ENCODE measurements at regions of chr4 and their contacts with region 1.

Region 1: DNA sequence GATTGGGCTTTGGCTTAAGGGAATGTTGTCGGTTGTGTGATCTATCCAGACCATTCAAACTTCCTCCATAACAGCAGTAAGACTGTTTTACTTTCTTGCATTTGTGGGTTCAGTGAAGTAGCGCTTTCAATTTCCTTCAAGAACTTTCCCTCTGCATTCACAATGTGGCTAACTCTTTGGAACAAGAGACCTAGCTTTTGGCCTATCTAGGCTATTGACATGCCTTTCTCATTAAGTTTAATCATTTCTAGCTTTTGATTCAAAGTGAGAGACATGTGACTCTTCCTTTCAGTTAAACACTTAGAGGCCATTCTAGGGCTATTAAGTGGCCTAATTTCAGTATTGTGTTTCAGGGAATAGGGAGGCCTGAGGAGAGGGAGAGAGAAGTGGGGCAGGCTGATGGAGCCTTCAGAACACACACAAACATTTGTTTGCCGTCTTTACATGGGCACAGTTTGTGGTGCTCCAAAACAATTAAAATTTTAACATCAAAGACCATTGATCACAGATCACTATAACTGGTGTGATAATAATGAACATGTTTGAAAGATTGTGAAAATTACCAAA is 34.1 kb downstream of the ADH5 start:
- DNase-seq: no peak
- H3K4me3 ChIP-seq: no peak overlapping the region
- H3K27ac ChIP-seq: no peak overlapping the region
- H3K4me1 ChIP-seq: 0 out of 7 replicates have a peak, but pooled peaks cover 0 to 1% (median 0%) of the 10 kb centered on the region in 4 experiments
- H3K27me3 ChIP-seq: no peaks in the 10 kb centered on the region
- CTCF ChIP-seq: no peak
- EP300 ChIP-seq: no peak
- POLR2A ChIP-seq: no peak
- RAD21 ChIP-seq: no peak

Region 2: GRCh38 chr4:98939892-98940298 is 114.6 kb before region 1 on chr4:
- CTCF ChIA-PET with region 1: interaction called, 12 read pairs
- POLR2A ChIA-PET with region 1: interaction called, 3 read pairs
- DNase-seq: no peak
- H3K4me3 ChIP-seq: no peak overlapping the region
- H3K27ac ChIP-seq: no peak overlapping the region
- H3K4me1 ChIP-seq: peaks cover 0 to 8% (median 2%) of the 10 kb centered on the region in 4 experiments; a peak in 3 of 7 replicates
- H3K27me3 ChIP-seq: no peaks in the 10 kb centered on the region
- CTCF ChIP-seq: peak in 2 of 3 experiments; percentile 58 to 76; a peak in 3 of 4 replicates
- EP300 ChIP-seq: no peak
- POLR2A ChIP-seq: no peak
- RAD21 ChIP-seq: peak; percentile 53 to 60

Region 3: GRCh38 chr4:99002279-99002678 is 52.2 kb before region 1 on chr4:
- CTCF ChIA-PET with region 1: interaction called, 17 read pairs
- POLR2A ChIA-PET with region 1: interaction called, 3 read pairs
- DNase-seq: no peak
- H3K4me3 ChIP-seq: no peak overlapping the region
- H3K27ac ChIP-seq: no peak overlapping the region
- H3K4me1 ChIP-seq: peaks cover 0 to 13% (median 8%) of the 10 kb centered on the region in 4 experiments; a peak in 5 of 7 replicates
- H3K27me3 ChIP-seq: no peaks in the 10 kb centered on the region
- CTCF ChIP-seq: no peak
- EP300 ChIP-seq: no peak
- POLR2A ChIP-seq: no peak
- RAD21 ChIP-seq: no peak

Region 4: GRCh38 chr4:99028187-99028586 is 26.3 kb before region 1 on chr4:
- CTCF ChIA-PET with region 1: interaction called, 14 read pairs
- POLR2A ChIA-PET with region 1: interaction called, 5 read pairs
- DNase-seq: no peak
- H3K4me3 ChIP-seq: no peak overlapping the region
- H3K27ac ChIP-seq: no peak overlapping the region
- H3K4me1 ChIP-seq: peaks cover 0 to 12% (median 5%) of the 10 kb centered on the region in 4 experiments; a peak in 3 of 7 replicates
- H3K27me3 ChIP-seq: no peaks in the 10 kb centered on the region
- CTCF ChIP-seq: no peak
- EP300 ChIP-seq: no peak
- POLR2A ChIP-seq: no peak
- RAD21 ChIP-seq: no peak

Region 5: GRCh38 chr4:99067617-99068016 is 13.1 kb after region 1 on chr4:
- CTCF ChIA-PET with region 1: interaction called, 33 read pairs
- POLR2A ChIA-PET with region 1: interaction called, 12 read pairs
- DNase-seq: no peak
- H3K4me3 ChIP-seq: no peak overlapping the region
- H3K27ac ChIP-seq: no peak overlapping the region
- H3K4me1 ChIP-seq: no peaks in the 10 kb centered on the region
- H3K27me3 ChIP-seq: no peaks in the 10 kb centered on the region
- CTCF ChIP-seq: no peak
- EP300 ChIP-seq: no peak
- POLR2A ChIP-seq: no peak
- RAD21 ChIP-seq: no peak

Region 6: GRCh38 chr4:99221980-99222379 is 167.5 kb after region 1 on chr4:
- CTCF ChIA-PET with region 1: no interaction called
- POLR2A ChIA-PET with region 1: no interaction called
- DNase-seq: no peak
- H3K4me3 ChIP-seq: no peak overlapping the region
- H3K27ac ChIP-seq: no peak overlapping the region
- H3K4me1 ChIP-seq: peaks cover 0 to 5% (median 1%) of the 10 kb centered on the region in 4 experiments; a peak in 2 of 7 replicates
- H3K27me3 ChIP-seq: no peaks in the 10 kb centered on the region
- CTCF ChIP-seq: no peak
- EP300 ChIP-seq: no peak
- POLR2A ChIP-seq: no peak
- RAD21 ChIP-seq: no peak